Activated CD4-positive, alpha-beta T cell treated with anti-CD3 and anti-CD28 coated beads for 36 hours (primary cell): ENCODE measurements at regions of chr9 and their contacts with region 1.

Region 1: GRCh38 chr9:110807956-110808598 is 139.5 kb downstream of the MUSK start:
- DNase-seq: no peak
- ATAC-seq: no peak
- H3K4me3 Mint-ChIP-seq: no peak overlapping the region
- H3K27ac Mint-ChIP-seq: no peak overlapping the region
- H3K4me1 Mint-ChIP-seq: no peaks in the 10 kb centered on the region
- H3K27me3 Mint-ChIP-seq: no peaks in the 10 kb centered on the region

Region 2: GRCh38 chr9:110156902-110157301 is 651.2 kb before region 1 on chr9:
- CTCF ChIA-PET with region 1: no interaction called
- POLR2A ChIA-PET with region 1: no interaction called
- intact Hi-C with region 1: no loop called
- DNase-seq: peak; percentile 27
- ATAC-seq: peak; percentile 66
- H3K4me3 Mint-ChIP-seq: no peak overlapping the region
- H3K27ac Mint-ChIP-seq: no peak overlapping the region
- H3K4me1 Mint-ChIP-seq: peaks cover 59% of the 10 kb centered on the region
- H3K27me3 Mint-ChIP-seq: no peaks in the 10 kb centered on the region

Region 3: GRCh38 chr9:110575181-110575580 is 232.9 kb before region 1 on chr9:
- CTCF ChIA-PET with region 1: no interaction called
- POLR2A ChIA-PET with region 1: interaction called, 10 read pairs
- intact Hi-C with region 1: no loop called
- DNase-seq: no peak
- ATAC-seq: no peak
- H3K4me3 Mint-ChIP-seq: no peak overlapping the region
- H3K27ac Mint-ChIP-seq: no peak overlapping the region
- H3K4me1 Mint-ChIP-seq: peaks cover 8% of the 10 kb centered on the region
- H3K27me3 Mint-ChIP-seq: peaks cover 25% of the 10 kb centered on the region

Region 4: GRCh38 chr9:110744753-110745384 is 63.2 kb before region 1 on chr9:
- CTCF ChIA-PET with region 1: no interaction called
- POLR2A ChIA-PET with region 1: no interaction called
- intact Hi-C with region 1: loop called in 1 of 2 experiments (anchors 10 kb)
- DNase-seq: no peak
- ATAC-seq: no peak
- H3K4me3 Mint-ChIP-seq: no peak overlapping the region
- H3K27ac Mint-ChIP-seq: no peak overlapping the region
- H3K4me1 Mint-ChIP-seq: no peaks in the 10 kb centered on the region
- H3K27me3 Mint-ChIP-seq: peaks cover 2% of the 10 kb centered on the region

Region 5: DNA sequence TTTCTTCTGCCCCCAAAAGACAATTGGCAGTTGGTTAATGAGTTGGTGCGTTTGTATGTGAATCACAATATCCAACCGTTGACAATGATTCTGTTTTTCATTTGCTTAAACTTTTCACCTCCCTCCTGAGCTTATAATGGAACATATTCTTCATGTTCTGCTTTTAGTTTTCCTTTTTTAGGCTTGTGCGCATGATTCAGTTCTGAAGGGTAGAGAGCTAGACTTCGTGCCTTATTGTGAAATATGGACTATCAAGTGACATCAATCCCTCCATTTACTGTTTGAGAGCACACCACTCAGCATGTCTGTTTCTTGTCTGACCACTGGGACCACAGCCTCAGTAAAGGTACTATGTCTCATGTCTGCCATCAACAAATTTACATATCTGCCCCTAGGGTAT is 260.7 kb after region 1 on chr9:
- CTCF ChIA-PET with region 1: no interaction called
- POLR2A ChIA-PET with region 1: no interaction called
- intact Hi-C with region 1: no loop called
- DNase-seq: no peak
- ATAC-seq: no peak
- H3K4me3 Mint-ChIP-seq: no peak overlapping the region
- H3K27ac Mint-ChIP-seq: no peak overlapping the region
- H3K4me1 Mint-ChIP-seq: no peaks in the 10 kb centered on the region
- H3K27me3 Mint-ChIP-seq: peaks cover 2% of the 10 kb centered on the region